ENCODE measurements at regions of chr1 and their contacts with region 1.

Region 1: DNA sequence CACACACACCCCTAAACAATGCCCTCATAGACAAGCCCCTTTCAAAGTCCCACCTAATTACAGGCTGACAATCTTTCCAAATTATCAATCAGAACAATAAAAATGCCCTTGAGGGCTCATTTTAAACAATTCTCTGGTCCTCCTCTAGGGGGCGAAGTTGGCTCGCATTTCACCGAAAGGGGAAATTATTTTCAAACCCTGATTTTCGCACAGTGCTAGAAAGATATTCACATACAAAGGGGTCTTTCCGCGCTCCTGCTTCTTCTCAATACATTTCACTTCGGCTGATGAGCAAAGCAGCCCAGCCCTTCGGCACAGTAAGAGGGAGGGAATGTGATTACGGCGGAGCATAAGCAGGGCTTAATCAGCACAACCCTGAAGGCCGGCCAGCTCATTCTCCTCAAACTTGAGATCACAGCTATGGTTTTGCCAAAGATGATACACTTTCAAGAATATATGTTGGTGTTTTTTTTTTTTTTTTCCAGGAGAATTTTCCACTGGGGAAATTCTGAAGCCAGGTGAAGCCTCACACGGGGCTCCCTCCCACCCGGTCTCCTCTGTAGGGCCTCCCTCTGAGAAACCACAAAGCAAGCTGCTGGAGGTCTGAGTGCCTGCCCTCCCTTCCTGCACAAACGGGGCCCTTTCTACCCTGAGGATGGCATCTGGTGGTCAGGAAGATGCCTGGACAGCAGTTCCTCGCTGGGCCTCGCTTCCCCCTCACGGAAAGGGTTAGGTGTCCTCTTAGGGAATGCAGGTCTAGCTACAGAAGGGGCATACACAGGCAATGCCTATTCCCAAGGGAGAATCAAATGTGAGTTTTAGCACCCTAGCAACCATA is 66.9 kb downstream of the GNG12 start:
- DNase-seq: peak in 3 of 5 donors; percentile 31 to 54 (median 42)
- ATAC-seq: peak in 3 of 4 donors; percentile 62 to 78 (median 73)
- H3K4me3 ChIP-seq: peak overlapping the region in 8 of 12 donors; percentile 11 to 49 (median 36)
- H3K27ac ChIP-seq: peak overlapping the region in 1 of 12 donors; percentile 37
- H3K4me1 ChIP-seq: peaks cover 0 to 22% (median 8%) of the 10 kb centered on the region in 12 donors
- H3K27me3 ChIP-seq: no peaks in the 10 kb centered on the region
- CTCF ChIP-seq: peak; percentile 67 to 82 (median 76)
- POLR2A ChIP-seq: no peak

Region 2: DNA sequence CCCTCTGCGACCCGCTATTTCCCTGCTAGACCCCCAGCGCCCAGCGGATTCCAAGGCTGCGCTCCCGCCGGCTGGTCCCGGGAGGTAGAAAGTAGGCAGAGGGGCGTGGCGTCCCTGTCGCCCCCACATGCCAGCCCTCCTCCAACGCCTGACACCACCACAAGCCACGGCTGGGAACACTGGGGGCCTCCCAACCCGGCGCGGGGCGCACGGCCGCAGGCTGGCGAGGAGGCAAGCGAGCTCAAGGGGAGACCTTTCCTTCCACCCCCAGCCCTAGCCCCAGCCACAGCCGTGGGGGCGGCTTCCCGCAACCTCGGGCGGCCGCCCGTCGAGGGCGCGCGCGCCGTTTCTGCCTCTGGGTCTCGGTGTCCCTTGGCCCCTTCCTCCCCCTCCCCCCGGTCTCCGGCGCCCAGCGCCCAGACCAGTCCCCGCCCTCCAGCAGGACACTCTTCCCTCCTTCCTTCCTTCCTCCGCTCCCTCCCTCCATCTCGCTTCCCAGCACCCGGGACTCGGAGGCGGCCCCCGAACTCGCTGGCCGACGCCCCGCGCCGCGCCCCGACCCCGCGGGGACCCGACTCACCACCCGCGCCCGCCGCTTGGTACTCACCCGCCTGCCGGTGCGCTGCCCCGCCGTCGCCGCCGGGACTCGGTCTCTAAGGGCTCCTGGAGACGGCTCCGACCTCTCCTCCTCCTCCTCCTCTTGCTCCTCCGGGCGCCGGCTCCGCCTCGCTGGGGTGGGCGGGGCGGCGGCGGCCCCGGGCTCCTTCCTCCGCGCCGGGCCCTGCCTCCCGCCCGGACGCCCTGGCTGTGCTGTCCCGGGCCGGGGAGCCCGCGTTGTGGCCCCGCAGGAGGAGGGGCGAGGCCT is 66.6 kb after region 1 on chr1 and contains the start of gene GNG12:
- intact Hi-C with region 1: loop called in 7 of 10 experiments (anchors 2 to 5 kb)
- DNase-seq: peak; percentile 71 to 85 (median 76)
- ATAC-seq: peak; percentile 53 to 93 (median 80)
- H3K4me3 ChIP-seq: peak within 1 kb of the TSS; percentile 66 to 93 (median 86)
- H3K27ac ChIP-seq: peak within 1 kb of the TSS; percentile 37 to 86 (median 82)
- H3K4me1 ChIP-seq: peaks cover 0 to 26% (median 5%) of the 10 kb centered on the region in 12 donors
- H3K27me3 ChIP-seq: peaks cover 0 to 44% (median 0%) of the 10 kb centered on the region in 9 donors
- CTCF ChIP-seq: no peak
- POLR2A ChIP-seq: peak in 1 of 2 donors; percentile 25
- total RNA-seq, gene GNG12: 27.2 to 80.2 (median 44.6) TPM

Region 3: DNA sequence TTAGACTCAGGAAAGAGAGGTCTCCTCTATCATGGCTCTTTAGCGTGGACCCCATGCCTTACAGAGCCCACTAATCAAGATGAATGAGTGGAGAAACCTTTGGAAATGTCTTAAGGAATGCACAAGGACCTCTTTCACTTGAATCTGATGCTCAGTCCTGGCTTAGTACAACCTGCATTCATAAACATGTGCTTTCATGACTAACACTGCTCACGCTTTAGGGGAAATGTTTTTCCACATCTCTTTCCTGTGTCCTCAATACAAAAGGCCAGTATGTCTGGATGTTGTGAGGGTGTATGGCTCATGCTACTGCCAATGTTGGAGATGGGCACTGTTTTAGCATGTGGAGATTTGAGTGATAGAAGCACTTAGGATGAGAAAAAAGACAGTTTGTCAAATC is 81.1 kb after region 1 on chr1:
- intact Hi-C with region 1: loop called in 6 of 10 experiments (anchors 2 to 5 kb)
- DNase-seq: no peak
- ATAC-seq: no peak
- H3K4me3 ChIP-seq: no peak overlapping the region
- H3K27ac ChIP-seq: no peak overlapping the region
- H3K4me1 ChIP-seq: peaks cover 0 to 15% (median 10%) of the 10 kb centered on the region in 12 donors
- H3K27me3 ChIP-seq: no peaks in the 10 kb centered on the region
- CTCF ChIP-seq: no peak
- POLR2A ChIP-seq: no peak

Region 4: GRCh38 chr1:68010090-68010489 is 243.7 kb after region 1 on chr1:
- intact Hi-C with region 1: loop called in 5 of 10 experiments (anchors 5 to 10 kb)
- DNase-seq: no peak
- ATAC-seq: peak in 2 of 4 donors; percentile 47 to 64
- H3K4me3 ChIP-seq: no peak overlapping the region
- H3K27ac ChIP-seq: no peak overlapping the region
- H3K4me1 ChIP-seq: no peaks in the 10 kb centered on the region
- H3K27me3 ChIP-seq: no peaks in the 10 kb centered on the region
- CTCF ChIP-seq: peak in 10 of 12 donors; percentile 17 to 55 (median 38)
- POLR2A ChIP-seq: no peak

Region 5: GRCh38 chr1:68321084-68321685 is 554.8 kb after region 1 on chr1:
- intact Hi-C with region 1: loop called in 1 of 10 experiments (anchors 10 kb)
- DNase-seq: peak; percentile 62 to 78 (median 67)
- ATAC-seq: peak; percentile 80 to 97 (median 92)
- H3K4me3 ChIP-seq: no peak overlapping the region
- H3K27ac ChIP-seq: peak overlapping the region in 1 of 12 donors; percentile 26
- H3K4me1 ChIP-seq: no peaks in the 10 kb centered on the region
- H3K27me3 ChIP-seq: no peaks in the 10 kb centered on the region
- CTCF ChIP-seq: peak; percentile 41 to 81 (median 74)
- POLR2A ChIP-seq: no peak

Region 6: GRCh38 chr1:68358439-68358838 is 592.1 kb after region 1 on chr1:
- intact Hi-C with region 1: loop called in 1 of 10 experiments (anchors 10 kb)
- DNase-seq: peak in 4 of 5 donors; percentile 21 to 34 (median 30)
- ATAC-seq: peak in 3 of 4 donors; percentile 20 to 45 (median 43)
- H3K4me3 ChIP-seq: no peak overlapping the region
- H3K27ac ChIP-seq: peak overlapping the region in 5 of 12 donors; percentile 1 to 45 (median 35)
- H3K4me1 ChIP-seq: peaks cover 0 to 18% (median 8%) of the 10 kb centered on the region in 12 donors
- H3K27me3 ChIP-seq: no peaks in the 10 kb centered on the region
- CTCF ChIP-seq: no peak
- POLR2A ChIP-seq: no peak

Measured in heart left ventricle (tissue), 16 donors.